ENCODE measurements at regions of chr20 and their contacts with region 1.

Region 1: GRCh38 chr20:58309575-58310290 is at the start of gene RAB22A:
- DNase-seq: peak; percentile 63 to 96 (median 72)

Region 2: GRCh38 chr20:58349586-58349985 is 39.9 kb after region 1 on chr20:
- intact Hi-C with region 1: no loop called
- DNase-seq: no peak

Region 3: DNA sequence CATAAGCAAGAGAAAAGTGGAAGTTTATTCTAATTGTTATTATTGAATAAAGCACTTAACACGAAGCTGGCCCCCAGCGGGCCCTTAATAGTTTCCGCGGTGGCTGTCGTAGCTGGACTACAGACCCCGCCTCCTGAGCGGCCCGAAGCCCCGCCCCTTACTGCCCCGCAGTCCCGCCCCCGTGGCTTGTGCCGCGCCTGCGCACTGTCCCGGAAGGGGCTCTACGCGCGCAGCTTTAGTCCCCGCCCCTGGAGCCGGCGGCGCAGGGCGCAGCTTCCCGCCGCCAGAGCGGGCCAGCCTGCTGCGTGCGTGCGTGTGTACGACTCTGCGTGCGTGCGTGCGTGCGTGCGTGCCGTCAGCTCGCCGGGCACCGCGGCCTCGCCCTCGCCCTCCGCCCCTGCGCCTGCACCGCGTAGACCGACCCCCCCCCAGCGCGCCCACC is 79.2 kb after region 1 on chr20 and contains the start of gene VAPB:
- intact Hi-C with region 1: loop called (anchors 5 kb)
- DNase-seq: peak; percentile 88 to 99 (median 95)

Region 4: GRCh38 chr20:58402827-58403226 is 93.1 kb after region 1 on chr20:
- intact Hi-C with region 1: no loop called
- DNase-seq: no peak

Region 5: DNA sequence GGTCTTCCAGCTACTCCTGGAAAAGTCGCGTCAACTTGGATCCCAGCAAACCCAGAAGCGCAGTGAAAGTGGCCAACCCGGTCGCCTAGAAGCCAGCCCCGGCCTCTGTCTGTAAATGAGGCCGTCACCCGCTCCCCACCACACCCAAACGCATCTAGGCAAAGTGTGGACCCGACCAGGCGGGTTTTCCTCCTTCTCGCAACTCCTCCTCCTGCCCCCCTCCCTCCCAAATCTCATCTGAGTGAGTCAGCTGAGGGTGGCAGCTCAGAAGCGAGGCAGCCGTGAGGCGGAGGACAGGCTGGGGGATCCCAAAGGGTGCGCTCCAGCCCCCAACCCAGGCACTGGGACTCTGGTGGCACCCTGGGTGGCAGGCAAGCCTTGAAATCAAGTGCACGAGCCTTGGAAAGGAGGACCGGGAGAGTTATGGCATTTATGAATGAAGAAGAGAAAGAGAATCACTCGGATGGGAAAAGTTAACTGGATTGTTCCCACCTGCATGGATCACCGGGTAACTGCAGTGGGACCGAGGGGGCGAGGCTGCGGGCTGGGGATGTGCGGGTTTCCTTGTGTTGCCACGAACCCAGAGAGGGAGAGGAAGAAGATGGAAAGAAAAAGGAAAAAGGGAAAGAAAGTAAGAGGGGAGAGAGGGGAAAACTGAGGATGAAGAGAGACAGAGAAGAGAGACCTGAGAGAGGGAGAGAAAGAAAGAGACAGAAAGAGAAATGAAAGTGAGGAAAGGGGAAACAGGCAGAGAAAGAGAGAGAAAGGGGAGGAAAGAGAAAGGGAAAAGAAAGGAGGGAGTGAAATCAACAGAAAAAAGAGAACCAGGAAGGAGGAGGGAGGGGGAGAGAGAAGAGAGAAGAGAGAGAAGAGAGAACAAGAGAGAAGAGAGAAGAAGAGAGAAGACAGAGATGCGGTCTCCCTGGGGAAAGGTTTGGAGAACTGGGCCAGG is 205.8 kb after region 1 on chr20 and contains the start of gene APCDD1L:
- intact Hi-C with region 1: no loop called
- DNase-seq: peak in 1 of 10 donors; percentile 58

Measured in posterior cingulate gyrus (tissue), 11 donors.